Colonic mucosa (tissue), 4 donors: ENCODE measurements at regions of chr6 and their contacts with region 1.

Region 1: DNA sequence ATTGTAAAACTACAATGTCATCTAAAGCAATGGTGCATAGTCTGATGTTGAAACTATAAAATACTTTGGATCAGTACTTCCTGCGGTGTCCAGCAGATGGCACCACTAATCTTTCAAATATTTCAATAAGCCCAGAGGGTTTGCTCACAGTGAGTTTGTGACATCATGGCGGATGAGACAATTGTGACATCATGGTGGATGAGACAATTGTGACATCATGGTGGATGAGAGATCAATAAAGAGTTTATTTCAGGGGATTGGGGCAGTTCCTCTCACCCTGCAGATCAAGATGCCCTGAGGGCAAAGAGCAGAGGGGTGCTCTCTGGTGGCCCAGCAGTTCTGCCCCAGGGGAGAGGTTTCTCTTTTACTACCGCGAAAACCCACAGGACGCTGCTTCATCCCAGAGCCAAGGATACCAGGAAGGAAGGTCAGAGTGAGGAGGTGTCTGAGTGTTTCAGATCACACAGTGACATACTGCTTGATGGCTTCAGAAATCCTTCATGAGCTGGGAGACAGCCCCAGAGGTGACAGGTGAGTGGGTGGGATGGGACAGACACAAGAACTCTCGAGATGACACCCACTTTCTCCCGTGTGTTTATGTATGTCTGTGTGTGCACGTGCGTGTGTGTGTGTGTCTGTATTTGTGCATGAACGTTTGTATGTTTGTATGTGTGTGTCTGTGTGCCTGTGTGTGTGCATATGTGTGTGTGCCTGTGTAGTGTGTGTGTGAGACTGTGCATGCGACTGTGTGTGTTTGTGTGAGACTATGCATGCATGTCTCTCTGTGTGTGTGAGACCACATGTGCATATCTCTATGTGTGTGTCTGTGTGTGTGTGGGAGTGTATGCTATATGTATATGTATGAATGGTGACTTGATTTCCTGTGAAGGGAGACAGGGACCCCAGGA is 7.3 kb upstream of the ULBP2 start:
- DNase-seq: peak; percentile 73
- H3K4me3 ChIP-seq: no peak overlapping the region
- H3K27ac ChIP-seq: no peak overlapping the region
- H3K4me1 ChIP-seq: peaks cover 9% of the 10 kb centered on the region
- H3K27me3 ChIP-seq: peaks cover 30% of the 10 kb centered on the region
- CTCF ChIP-seq: peak; percentile 77

Region 2: DNA sequence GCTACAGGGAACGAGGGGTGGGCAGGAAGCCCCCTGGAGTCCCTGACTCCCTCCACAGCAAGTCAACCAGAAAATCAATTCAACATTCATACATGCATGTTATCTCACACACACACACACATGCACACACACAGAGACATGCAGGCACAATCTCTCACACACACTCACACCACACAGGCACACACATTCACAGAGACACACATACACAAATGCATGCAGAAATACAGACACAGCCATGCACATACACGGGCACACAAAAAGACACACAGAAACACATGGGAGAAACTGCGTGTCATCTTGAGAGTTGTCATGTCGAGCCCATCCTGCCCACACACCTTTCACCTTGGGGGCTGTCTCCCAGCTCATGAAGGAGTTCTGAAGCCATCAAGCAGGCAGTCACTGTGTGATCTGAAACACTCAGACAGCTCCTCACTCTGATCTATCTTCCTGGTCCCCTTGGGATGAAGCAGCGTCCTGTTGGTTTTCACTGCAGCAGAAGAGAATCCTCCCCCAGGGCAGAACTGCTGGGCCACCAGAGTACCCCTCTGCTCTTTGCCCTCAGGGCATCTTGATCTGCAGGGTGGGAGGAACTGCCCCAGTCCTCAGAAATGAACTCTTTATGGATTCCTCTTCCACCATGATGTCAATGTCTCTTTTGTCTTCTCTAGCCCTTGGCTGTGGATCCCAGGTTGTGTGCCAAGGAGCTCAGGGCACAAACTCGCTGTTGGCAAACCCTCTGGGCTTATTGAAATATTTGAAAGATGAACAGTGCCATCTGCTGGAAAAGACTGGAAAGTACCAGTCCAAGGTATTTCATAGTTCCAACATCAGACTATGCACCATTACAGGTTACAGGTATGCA is 82.1 kb after region 1 on chr6:
- intact Hi-C with region 1: loop called (anchors 1 kb)
- DNase-seq: peak; percentile 65
- H3K4me3 ChIP-seq: no peak overlapping the region
- H3K27ac ChIP-seq: no peak overlapping the region
- H3K4me1 ChIP-seq: no peaks in the 10 kb centered on the region
- H3K27me3 ChIP-seq: peaks cover 39% of the 10 kb centered on the region
- CTCF ChIP-seq: peak; percentile 53

Region 3: GRCh38 chr6:150068720-150069648 is 134.5 kb after region 1 on chr6 and contains the start of gene ULBP3:
- intact Hi-C with region 1: no loop called
- DNase-seq: peak; percentile 94
- H3K4me3 ChIP-seq: peak within 1 kb of the TSS; percentile 53
- H3K27ac ChIP-seq: peak within 1 kb of the TSS; percentile 61
- H3K4me1 ChIP-seq: no peaks in the 10 kb centered on the region
- H3K27me3 ChIP-seq: no peaks in the 10 kb centered on the region
- CTCF ChIP-seq: peak; percentile 46
- total RNA-seq, gene ULBP3: 1.8 to 1.9 TPM